ENCODE measurements at regions of chr12 and their contacts with region 1.

Region 1: GRCh38 chr12:30795410-30796312 is 40.9 kb upstream of the CAPRIN2 start:
- DNase-seq: no peak
- H3K4me3 ChIP-seq: peak overlapping the region; percentile 77
- H3K27ac ChIP-seq: peak overlapping the region; percentile 96
- H3K27me3 ChIP-seq: no peaks in the 10 kb centered on the region
- CTCF ChIP-seq: peak; percentile 10; the same call in 1 of the 2 replicates

Region 2: GRCh38 chr12:29334937-29335336 is 1460.7 kb before region 1 on chr12:
- CTCF ChIA-PET with region 1: no interaction called
- POLR2A ChIA-PET with region 1: interaction called, 12 read pairs
- DNase-seq: no peak
- H3K4me3 ChIP-seq: no peak overlapping the region
- H3K27ac ChIP-seq: no peak overlapping the region
- H3K27me3 ChIP-seq: no peaks in the 10 kb centered on the region
- CTCF ChIP-seq: no peak

Region 3: GRCh38 chr12:30806989-30807694 is 11.5 kb after region 1 on chr12:
- CTCF ChIA-PET with region 1: interaction called, 16 read pairs
- POLR2A ChIA-PET with region 1: no interaction called
- DNase-seq: no peak
- H3K4me3 ChIP-seq: no peak overlapping the region
- H3K27ac ChIP-seq: no peak overlapping the region
- H3K27me3 ChIP-seq: no peaks in the 10 kb centered on the region
- CTCF ChIP-seq: peak; percentile 80

Region 4: DNA sequence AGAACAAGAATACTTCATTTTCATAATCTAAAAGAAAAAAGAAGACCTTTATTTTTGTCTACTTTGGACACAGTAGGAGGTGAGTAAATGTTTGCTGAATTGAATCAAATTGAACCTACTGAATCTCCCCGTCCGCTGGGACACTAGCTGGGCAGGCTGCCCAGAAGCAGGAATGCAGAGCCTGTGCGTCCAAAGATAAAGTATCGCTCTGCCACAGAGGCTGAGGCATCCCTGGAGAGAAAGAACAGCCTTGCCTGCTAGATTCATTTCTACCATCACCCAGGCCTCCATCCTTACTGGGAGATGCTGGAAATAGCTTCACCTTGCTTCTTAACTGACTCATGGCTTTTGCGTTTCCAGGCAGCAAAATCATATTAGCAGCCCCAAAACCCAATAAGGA is 66.8 kb after region 1 on chr12:
- CTCF ChIA-PET with region 1: no interaction called
- POLR2A ChIA-PET with region 1: no interaction called
- DNase-seq: no peak
- H3K4me3 ChIP-seq: no peak overlapping the region
- H3K27ac ChIP-seq: no peak overlapping the region
- H3K27me3 ChIP-seq: peaks cover 4% of the 10 kb centered on the region
- CTCF ChIP-seq: no peak